Dendritic cell treated with granulocyte-macrophage colony-stimulating factor and Interleukin-4, amounts not matched to agents 40 ng/mL and 50 ng/mL, for 4 days (primary cell): ENCODE measurements at regions of chr4 and their contacts with region 1.

Region 1: GRCh38 chr4:157992038-157992705 is 180.7 kb downstream of the GASK1B start:
- H3K4me3 Mint-ChIP-seq: peak overlapping the region; percentile 75
- H3K27ac Mint-ChIP-seq: peak overlapping the region; percentile 86
- H3K4me1 Mint-ChIP-seq: peaks cover 49% of the 10 kb centered on the region
- H3K27me3 Mint-ChIP-seq: no peaks in the 10 kb centered on the region

Region 2: DNA sequence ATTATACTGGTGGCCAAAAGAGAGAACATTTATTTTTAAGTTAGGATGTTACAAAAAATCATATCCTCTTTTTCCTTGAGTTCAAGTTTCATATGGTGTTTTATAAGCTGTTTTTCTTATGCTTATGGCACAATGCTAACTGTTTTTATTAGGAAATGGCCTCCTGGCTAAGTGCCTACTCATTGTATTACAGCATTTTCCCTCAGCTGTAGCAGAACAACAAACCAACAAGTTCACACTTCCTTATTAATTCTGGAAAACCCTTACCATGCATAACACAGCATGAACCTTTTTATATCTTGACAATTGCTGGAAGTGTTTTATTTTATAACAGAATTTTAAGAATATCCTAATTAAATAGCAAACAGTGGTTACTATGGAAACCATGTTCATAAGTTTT is 14.8 kb after region 1 on chr4:
- intact Hi-C with region 1: loop called (anchors 1 kb)
- H3K4me3 Mint-ChIP-seq: no peak overlapping the region
- H3K27ac Mint-ChIP-seq: peak overlapping the region; percentile 40
- H3K4me1 Mint-ChIP-seq: peaks cover 67% of the 10 kb centered on the region
- H3K27me3 Mint-ChIP-seq: no peaks in the 10 kb centered on the region

Region 3: DNA sequence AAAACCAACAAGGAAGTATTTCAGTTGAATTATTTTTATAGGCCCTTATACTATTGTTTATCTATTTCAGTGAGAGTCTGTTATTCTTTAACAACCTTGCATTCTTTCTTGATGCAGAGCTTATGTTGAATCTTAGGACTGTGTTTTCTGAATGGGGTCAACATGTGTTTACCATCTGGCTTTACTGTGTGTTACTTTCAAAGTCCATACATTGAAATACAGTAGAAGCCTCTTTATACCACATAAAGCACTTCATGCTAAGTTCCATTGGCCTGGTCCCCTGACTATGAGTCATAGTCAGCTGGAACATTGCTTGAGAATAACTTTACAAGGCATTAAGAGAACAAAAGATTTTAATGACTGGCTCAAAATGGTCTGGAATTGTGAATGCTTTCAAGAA is 28.0 kb after region 1 on chr4:
- intact Hi-C with region 1: no loop called
- H3K4me3 Mint-ChIP-seq: no peak overlapping the region
- H3K27ac Mint-ChIP-seq: peak overlapping the region; percentile 39
- H3K4me1 Mint-ChIP-seq: peaks cover 6% of the 10 kb centered on the region
- H3K27me3 Mint-ChIP-seq: no peaks in the 10 kb centered on the region

Region 4: GRCh38 chr4:158033416-158034120 is 41.4 kb after region 1 on chr4:
- intact Hi-C with region 1: loop called (anchors 5 kb)
- H3K4me3 Mint-ChIP-seq: peak overlapping the region; percentile 28
- H3K27ac Mint-ChIP-seq: peak overlapping the region; percentile 83
- H3K4me1 Mint-ChIP-seq: peaks cover 38% of the 10 kb centered on the region
- H3K27me3 Mint-ChIP-seq: no peaks in the 10 kb centered on the region

Region 5: DNA sequence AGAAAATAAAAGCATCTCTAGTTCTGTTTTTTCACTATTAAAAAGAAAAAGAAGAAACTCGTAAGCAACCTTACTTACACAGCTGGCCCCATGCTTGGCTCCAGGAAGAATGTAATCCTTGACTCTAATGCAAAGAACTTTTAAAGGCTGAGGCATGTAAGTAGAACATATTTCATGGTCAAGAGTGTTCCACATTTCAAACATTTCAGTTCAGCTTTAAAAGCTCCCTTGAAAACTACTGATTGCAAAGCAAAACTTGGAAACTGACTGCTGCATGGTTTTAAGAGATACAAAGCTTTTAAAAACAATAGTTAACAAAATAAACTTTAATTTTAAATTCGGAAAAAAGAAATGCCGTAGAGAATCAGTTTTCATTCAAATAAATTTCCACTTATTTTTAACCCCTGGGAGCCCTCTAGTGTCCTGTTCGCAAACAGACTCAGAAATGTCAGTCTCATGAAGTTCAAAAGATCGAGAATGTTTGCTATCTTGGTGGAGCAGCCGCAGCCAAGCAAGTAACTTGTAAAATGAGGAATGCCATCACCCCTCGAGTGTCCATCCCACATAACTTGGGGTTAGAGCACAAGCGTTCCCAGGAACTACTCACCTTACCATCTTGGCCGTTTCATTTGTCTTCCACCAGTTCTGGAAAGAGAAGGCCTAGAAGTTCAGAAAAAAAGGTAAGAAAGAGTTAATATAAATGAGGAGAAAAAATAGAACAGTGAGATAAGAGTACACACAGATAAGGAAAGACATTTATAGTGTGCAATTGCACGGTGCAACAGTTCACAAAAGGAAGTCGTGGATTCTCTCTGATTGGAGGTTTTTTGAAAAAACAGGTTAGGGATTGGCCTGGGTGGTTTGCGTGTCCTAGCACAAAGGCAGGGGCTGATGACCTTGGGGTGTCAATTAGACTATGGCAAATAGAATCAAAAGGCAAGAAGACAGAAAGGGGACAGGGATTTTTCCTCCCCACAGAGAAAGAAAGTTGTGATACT is 180.4 kb after region 1 on chr4 and contains the start of gene GASK1B:
- intact Hi-C with region 1: loop called (anchors 1 kb)
- H3K4me3 Mint-ChIP-seq: peak within 1 kb of the TSS; percentile 78
- H3K27ac Mint-ChIP-seq: peak within 1 kb of the TSS; percentile 83
- H3K4me1 Mint-ChIP-seq: peaks cover 58% of the 10 kb centered on the region
- H3K27me3 Mint-ChIP-seq: no peaks in the 10 kb centered on the region

Region 6: GRCh38 chr4:158239196-158239595 is 247.0 kb after region 1 on chr4:
- intact Hi-C with region 1: no loop called
- H3K4me3 Mint-ChIP-seq: no peak overlapping the region
- H3K27ac Mint-ChIP-seq: no peak overlapping the region
- H3K4me1 Mint-ChIP-seq: peaks cover 6% of the 10 kb centered on the region
- H3K27me3 Mint-ChIP-seq: no peaks in the 10 kb centered on the region